A673 (cell line): ENCODE measurements at regions of chr3 and their contacts with region 1.

Region 1: DNA sequence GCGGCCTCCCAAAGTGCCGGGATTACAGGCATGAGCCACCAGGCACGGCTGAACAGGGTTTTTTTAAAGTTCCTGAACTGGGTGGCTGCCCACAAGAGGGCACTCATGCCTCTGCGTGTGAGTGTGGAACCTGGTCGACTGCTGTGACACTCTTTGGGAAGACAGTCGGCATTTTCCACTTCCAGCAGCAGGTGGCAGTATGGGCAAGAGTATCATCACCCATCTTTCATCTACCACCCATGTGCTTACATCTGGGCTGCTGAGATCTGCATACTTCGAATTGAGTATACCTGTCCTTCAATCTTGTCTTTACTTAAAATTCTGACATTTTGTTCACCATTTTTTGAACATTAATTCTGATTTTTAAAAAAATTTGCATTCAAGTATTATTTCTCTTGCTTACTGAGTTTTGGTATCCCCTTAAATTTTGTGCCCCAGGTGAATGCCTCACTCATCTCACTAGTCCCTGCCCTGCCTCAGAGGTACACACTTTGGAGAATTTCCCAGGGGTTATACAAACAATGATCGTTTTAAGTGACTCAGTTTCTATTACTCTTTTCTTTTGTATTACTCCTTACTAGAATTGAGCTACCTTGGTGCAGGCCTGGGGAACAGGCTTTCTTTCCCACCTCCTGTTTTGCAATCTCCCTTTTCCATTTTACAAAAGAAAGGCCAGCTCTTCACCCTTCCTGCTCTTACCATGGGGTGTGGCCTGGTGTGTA is 11.8 kb downstream of the CLEC3B start:
- DNase-seq: peak; percentile 89
- H3K4me3 ChIP-seq: no peak overlapping the region
- H3K27ac ChIP-seq: no peak overlapping the region
- H3K4me1 ChIP-seq: no peaks in the 10 kb centered on the region
- H3K27me3 ChIP-seq: no peaks in the 10 kb centered on the region
- CTCF ChIP-seq: peak; percentile 79

Region 2: GRCh38 chr3:45210308-45211041 is 172.6 kb after region 1 on chr3:
- CTCF ChIA-PET with region 1: no interaction called
- POLR2A ChIA-PET with region 1: no interaction called
- intact Hi-C with region 1: loop called (anchors 2 kb)
- DNase-seq: peak; percentile 44
- H3K4me3 ChIP-seq: no peak overlapping the region
- H3K27ac ChIP-seq: no peak overlapping the region
- H3K4me1 ChIP-seq: no peaks in the 10 kb centered on the region
- H3K27me3 ChIP-seq: no peaks in the 10 kb centered on the region
- CTCF ChIP-seq: peak; percentile 59

Region 3: GRCh38 chr3:45507820-45508317 is 470.0 kb after region 1 on chr3:
- CTCF ChIA-PET with region 1: interaction called, 7 read pairs
- POLR2A ChIA-PET with region 1: no interaction called
- intact Hi-C with region 1: loop called (anchors 2 kb)
- DNase-seq: peak; percentile 82
- H3K4me3 ChIP-seq: no peak overlapping the region
- H3K27ac ChIP-seq: peak overlapping the region; percentile 99
- H3K4me1 ChIP-seq: peaks cover 57% of the 10 kb centered on the region
- H3K27me3 ChIP-seq: no peaks in the 10 kb centered on the region
- CTCF ChIP-seq: peak; percentile 49

Region 4: GRCh38 chr3:45841757-45842491 is 804.0 kb after region 1 on chr3 and contains the start of gene LZTFL1:
- CTCF ChIA-PET with region 1: no interaction called
- POLR2A ChIA-PET with region 1: no interaction called
- intact Hi-C with region 1: loop called (anchors 5 kb)
- DNase-seq: peak; percentile 91
- H3K4me3 ChIP-seq: peak within 1 kb of the TSS; percentile 68
- H3K27ac ChIP-seq: peak within 1 kb of the TSS; percentile 37
- H3K4me1 ChIP-seq: no peaks in the 10 kb centered on the region
- H3K27me3 ChIP-seq: peaks cover 3% of the 10 kb centered on the region
- CTCF ChIP-seq: no peak
- total RNA-seq, gene LZTFL1: 9.5 and 10.6 TPM in 2 replicates